HepG2 (cell line): ENCODE measurements at regions of chr13 and their contacts with region 1.

Region 1: DNA sequence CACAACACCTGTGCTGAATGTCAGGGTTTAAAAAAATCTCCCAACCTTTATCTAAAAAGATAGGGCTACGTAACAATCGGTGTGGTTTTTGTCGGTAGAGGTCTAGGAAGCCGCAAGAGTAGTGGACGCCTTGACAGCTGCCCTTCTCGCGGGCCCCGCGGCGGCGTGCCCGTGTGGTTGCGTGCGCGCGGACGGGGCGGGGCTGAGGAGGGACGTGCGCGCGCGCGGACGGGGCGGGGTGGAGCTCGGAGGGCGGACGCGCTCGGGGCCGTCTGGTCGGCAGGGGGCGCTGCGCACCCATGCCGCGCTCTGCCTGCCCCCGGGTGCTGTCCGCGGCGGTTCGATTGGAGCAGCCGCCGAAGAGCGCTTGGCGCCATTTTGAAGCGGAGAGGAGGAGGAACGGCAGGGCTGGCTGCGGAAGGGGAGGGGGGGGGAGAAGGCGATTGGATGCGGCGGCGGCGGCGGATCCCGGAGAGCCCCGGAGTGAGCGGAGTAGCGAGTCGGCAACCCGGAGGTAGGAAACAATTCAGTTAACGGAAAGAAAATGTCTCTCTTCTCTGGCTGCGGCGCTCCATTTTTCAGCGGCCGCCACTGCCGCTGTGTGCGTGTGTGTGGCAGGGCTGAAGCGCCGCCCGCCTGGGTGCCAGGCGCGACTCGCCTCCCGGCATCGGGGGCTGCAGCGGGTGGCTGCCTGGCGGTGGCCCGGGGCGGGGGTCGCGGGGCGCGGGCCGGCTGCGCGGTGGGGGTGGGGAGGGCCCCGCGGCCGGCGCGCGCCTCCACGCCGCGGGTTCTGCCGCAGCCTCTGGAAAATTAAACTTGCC is at the start of gene PDS5B:
- DNase-seq: peak; percentile 87
- ATAC-seq: peak; percentile 90
- H3K4me3 ChIP-seq: peak within 1 kb of the TSS; percentile 83 to 96 (median 85)
- H3K27ac ChIP-seq: peak within 1 kb of the TSS; percentile 94
- H3K4me1 ChIP-seq: peaks cover 31% of the 10 kb centered on the region
- H3K27me3 ChIP-seq: no peaks in the 10 kb centered on the region; a peak in 1 of 5 replicates
- CTCF ChIP-seq: peak; percentile 92
- EP300 ChIP-seq: no peak
- POLR2A ChIP-seq: peak; percentile 47 to 50; a peak in 1 of 4 replicates
- RAD21 ChIP-seq: peak; percentile 99
- total RNA-seq, gene PDS5B: 24.6 and 53.7 TPM in 2 replicates

Region 2: DNA sequence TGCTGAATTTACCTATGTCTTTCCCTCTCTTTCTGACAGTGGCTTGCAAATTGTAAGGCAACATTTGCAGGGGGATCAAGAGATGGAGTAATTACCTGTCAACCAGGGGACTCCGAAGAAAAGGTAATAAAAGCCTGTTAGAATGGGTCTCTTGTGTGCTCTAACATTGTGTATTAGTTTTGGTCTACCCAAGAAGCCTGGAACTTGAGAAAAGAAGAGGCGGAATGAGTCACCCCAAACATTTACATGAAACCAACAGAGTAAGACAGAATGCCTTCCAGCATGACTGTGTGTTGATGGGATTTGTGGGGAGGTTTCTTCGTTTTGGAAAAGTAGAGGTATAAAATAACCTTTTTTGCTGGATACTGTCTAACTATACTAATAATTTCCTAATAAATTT is 307.9 kb before region 1 on chr13:
- CTCF ChIA-PET with region 1: no interaction called
- POLR2A ChIA-PET with region 1: no interaction called
- in situ Hi-C with region 1: no loop called
- intact Hi-C with region 1: no loop called
- DNase-seq: no peak
- ATAC-seq: no peak
- H3K4me3 ChIP-seq: no peak overlapping the region
- H3K27ac ChIP-seq: no peak overlapping the region
- H3K4me1 ChIP-seq: peaks cover 29% of the 10 kb centered on the region
- H3K27me3 ChIP-seq: no peaks in the 10 kb centered on the region
- CTCF ChIP-seq: no peak
- EP300 ChIP-seq: no peak
- POLR2A ChIP-seq: no peak
- RAD21 ChIP-seq: no peak

Region 3: GRCh38 chr13:32639502-32640105 is 53.3 kb after region 1 on chr13:
- CTCF ChIA-PET with region 1: interaction called, 12 read pairs
- POLR2A ChIA-PET with region 1: no interaction called
- in situ Hi-C with region 1: no loop called
- intact Hi-C with region 1: loop called (anchors 1 kb)
- DNase-seq: peak; percentile 50
- ATAC-seq: peak; percentile 78
- H3K4me3 ChIP-seq: no peak overlapping the region
- H3K27ac ChIP-seq: no peak overlapping the region
- H3K4me1 ChIP-seq: peaks cover 27% of the 10 kb centered on the region
- H3K27me3 ChIP-seq: no peaks in the 10 kb centered on the region
- CTCF ChIP-seq: peak; percentile 75
- EP300 ChIP-seq: no peak
- POLR2A ChIP-seq: no peak
- RAD21 ChIP-seq: peak; percentile 53; the same call in 1 of the 2 replicates

Region 4: DNA sequence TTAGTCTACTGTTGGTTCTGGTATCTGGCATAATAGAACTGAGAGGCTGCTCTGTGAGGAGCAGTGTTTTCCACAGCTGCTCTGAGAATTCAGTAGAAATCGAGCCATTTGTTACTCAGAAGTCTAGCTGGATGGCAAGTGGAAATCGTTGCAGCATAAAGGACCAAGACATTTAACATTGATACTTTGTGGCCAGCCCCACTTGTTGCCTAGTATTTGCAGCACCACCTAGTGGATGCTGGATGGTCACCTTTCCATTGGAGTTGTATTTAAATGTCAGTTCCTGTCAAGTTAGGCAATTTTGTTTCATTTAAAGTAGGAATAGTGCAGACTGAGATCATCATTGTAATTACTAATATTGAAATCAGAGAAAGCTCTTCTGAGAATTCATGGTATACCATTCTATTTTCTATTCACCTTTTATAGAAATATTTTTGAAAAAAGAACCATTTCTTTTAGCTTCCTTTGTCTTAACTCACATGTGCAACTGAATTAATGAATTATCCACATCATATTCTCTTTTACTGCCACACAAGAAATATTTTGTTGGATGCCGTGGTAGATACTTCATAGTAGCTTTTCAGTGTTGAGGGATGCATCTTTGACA is 64.5 kb after region 1 on chr13:
- CTCF ChIA-PET with region 1: interaction called, 13 read pairs
- POLR2A ChIA-PET with region 1: interaction called, 3 read pairs
- in situ Hi-C with region 1: loop called (anchors 5 kb)
- intact Hi-C with region 1: loop called (anchors 1 kb)
- DNase-seq: peak; percentile 73
- ATAC-seq: peak; percentile 92
- H3K4me3 ChIP-seq: no peak overlapping the region
- H3K27ac ChIP-seq: no peak overlapping the region
- H3K4me1 ChIP-seq: peaks cover 8% of the 10 kb centered on the region; the same call in 1 of the 2 replicates
- H3K27me3 ChIP-seq: no peaks in the 10 kb centered on the region
- CTCF ChIP-seq: peak; percentile 83
- EP300 ChIP-seq: no peak
- POLR2A ChIP-seq: no peak
- RAD21 ChIP-seq: peak; percentile 21; the same call in 1 of the 2 replicates

Region 5: DNA sequence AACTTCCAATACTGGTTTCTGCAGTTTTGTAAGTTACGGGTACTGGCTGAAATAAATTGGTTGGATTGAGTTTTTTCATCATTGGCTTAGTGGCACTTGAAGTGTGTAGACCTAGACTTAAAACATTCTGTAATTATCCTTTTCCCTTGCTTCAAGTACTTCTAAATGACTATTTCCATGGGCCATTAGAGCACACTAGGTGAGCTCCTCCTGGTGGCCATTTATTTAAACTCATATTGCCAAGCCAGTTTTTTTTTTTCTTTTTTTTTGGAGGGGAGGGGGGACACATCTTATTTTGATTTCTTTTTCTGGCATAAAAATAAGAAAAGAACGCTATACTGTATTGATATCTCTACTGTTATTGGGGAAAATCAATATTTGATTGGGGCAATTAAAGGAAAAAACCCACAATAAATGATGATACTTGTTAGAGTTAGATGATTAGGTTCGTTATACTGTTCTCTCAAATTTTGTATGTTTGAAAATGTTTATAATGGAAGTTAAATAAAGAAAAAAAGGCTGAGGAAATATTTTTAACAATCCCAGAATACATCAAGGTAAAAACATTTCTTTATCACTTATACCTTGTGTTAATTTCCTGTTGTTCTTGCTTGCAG is 82.8 kb after region 1 on chr13:
- CTCF ChIA-PET with region 1: interaction called, 21 read pairs
- POLR2A ChIA-PET with region 1: no interaction called
- in situ Hi-C with region 1: no loop called
- intact Hi-C with region 1: loop called (anchors 1 kb)
- DNase-seq: peak; percentile 53
- ATAC-seq: peak; percentile 52; the same call in 1 of the 3 replicates
- H3K4me3 ChIP-seq: no peak overlapping the region
- H3K27ac ChIP-seq: no peak overlapping the region
- H3K4me1 ChIP-seq: peaks cover 1% of the 10 kb centered on the region; the same call in 1 of the 2 replicates
- H3K27me3 ChIP-seq: no peaks in the 10 kb centered on the region
- CTCF ChIP-seq: peak; percentile 56
- EP300 ChIP-seq: no peak
- POLR2A ChIP-seq: no peak
- RAD21 ChIP-seq: no peak

Region 6: DNA sequence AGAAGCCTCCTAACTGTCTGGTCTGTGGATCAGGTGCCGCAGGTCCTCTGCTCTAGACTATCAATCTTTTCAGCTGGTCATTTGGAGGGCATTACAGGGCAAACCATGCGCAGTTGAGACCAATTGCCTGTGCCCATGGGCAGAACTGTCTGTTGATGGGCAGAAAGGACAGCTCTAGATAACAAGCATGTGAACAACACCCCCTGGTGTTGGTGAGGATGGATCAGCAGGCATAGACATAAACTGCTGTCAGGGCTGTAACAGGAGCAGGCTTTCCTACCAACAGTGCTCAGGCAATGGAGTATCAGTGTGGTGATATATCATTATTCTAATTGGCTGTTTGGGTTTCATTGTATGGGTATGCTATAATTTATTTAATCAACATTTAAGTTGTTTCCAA is 325.2 kb after region 1 on chr13:
- CTCF ChIA-PET with region 1: no interaction called
- POLR2A ChIA-PET with region 1: no interaction called
- in situ Hi-C with region 1: loop called (anchors 10 kb)
- intact Hi-C with region 1: no loop called
- DNase-seq: peak; percentile 36
- ATAC-seq: peak; percentile 96
- H3K4me3 ChIP-seq: no peak overlapping the region
- H3K27ac ChIP-seq: no peak overlapping the region
- H3K4me1 ChIP-seq: no peaks in the 10 kb centered on the region
- H3K27me3 ChIP-seq: no peaks in the 10 kb centered on the region; a peak in 1 of 5 replicates
- CTCF ChIP-seq: peak; percentile 68
- EP300 ChIP-seq: no peak
- POLR2A ChIP-seq: no peak
- RAD21 ChIP-seq: 0 out of 2 replicates have a peak, but pooled peaks have one; percentile 13